Pancreas (tissue), 10 donors: ENCODE measurements at regions of chr1 and their contacts with region 1.

Region 1: GRCh38 chr1:17125756-17126237 is 6.5 kb upstream of the PADI2 start:
- DNase-seq: peak; percentile 77 to 99 (median 92)
- ATAC-seq: peak; percentile 88 to 95 (median 93)
- H3K4me3 ChIP-seq: no peak overlapping the region
- H3K27ac ChIP-seq: no peak overlapping the region
- H3K4me1 ChIP-seq: no peaks in the 10 kb centered on the region
- H3K27me3 ChIP-seq: no peaks in the 10 kb centered on the region
- CTCF ChIP-seq: peak; percentile 83 to 90 (median 88)

Region 2: DNA sequence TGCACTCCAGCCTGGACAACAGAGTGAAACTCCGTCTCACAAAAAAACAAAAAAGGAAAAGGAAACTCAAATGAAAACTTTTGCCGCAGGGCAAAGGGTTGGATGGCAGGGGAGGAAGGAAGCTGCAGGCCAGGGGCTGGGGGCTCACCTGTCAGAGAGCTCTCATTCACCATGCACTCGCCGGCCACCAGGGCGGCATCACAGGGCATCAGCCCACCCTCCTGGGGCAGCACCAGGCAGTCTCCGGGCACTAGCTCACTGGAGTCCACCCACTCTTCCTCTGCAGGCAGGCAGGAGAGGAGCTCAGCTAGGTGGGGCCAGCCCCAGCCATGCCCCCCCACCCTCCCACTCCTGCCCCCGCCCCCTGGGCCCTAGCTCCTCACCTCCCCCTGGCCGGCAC is 125.9 kb before region 1 on chr1:
- intact Hi-C with region 1: no loop called
- DNase-seq: no peak
- ATAC-seq: no peak
- H3K4me3 ChIP-seq: no peak overlapping the region
- H3K27ac ChIP-seq: no peak overlapping the region
- H3K4me1 ChIP-seq: no peaks in the 10 kb centered on the region
- H3K27me3 ChIP-seq: no peaks in the 10 kb centered on the region
- CTCF ChIP-seq: no peak

Region 3: DNA sequence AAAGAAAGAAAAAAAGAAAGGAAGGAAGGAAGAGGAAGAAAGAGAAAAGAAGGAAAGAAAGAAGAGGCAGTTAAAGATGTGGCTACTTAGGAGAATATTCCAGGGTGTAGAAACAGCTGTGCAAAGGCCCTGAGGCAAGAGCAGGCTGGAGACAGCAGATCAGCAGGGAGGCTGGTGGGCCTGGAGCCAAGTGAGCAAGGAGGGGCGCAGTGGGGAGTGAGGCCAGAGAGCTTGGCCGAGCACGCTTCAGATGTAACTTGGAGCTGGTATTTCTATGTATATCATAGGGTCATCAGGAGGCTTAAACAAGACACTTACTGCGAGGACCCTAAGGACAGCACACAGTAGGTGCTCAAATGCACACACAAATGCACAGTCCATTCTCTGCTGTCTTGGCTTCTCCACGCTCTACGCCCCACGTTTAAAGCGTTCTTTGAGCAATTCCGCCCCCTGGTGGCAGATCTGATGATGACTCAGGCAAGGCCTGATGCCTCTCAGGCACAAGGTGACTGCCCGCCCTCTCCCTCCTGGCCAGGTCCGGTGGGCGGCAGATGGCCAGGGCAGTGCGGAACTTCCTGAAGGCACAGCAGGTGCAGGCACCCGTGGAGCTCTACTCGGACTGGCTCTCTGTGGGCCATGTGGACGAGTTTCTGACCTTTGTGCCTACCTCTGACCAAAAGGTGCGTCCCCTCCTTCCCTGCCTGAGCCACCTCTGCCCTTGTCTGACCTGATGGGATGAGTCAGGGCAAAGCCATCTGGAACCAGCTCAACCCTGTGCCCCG is 111.2 kb after region 1 on chr1:
- intact Hi-C with region 1: loop called in 2 of 3 experiments (anchors 5 kb)
- DNase-seq: peak; percentile 74 to 98 (median 90)
- ATAC-seq: peak; percentile 51 to 83 (median 78)
- H3K4me3 ChIP-seq: no peak overlapping the region
- H3K27ac ChIP-seq: no peak overlapping the region
- H3K4me1 ChIP-seq: peaks cover 2 to 5% (median 4%) of the 10 kb centered on the region in 3 donors
- H3K27me3 ChIP-seq: no peaks in the 10 kb centered on the region
- CTCF ChIP-seq: peak; percentile 85 to 92 (median 87)

Region 4: DNA sequence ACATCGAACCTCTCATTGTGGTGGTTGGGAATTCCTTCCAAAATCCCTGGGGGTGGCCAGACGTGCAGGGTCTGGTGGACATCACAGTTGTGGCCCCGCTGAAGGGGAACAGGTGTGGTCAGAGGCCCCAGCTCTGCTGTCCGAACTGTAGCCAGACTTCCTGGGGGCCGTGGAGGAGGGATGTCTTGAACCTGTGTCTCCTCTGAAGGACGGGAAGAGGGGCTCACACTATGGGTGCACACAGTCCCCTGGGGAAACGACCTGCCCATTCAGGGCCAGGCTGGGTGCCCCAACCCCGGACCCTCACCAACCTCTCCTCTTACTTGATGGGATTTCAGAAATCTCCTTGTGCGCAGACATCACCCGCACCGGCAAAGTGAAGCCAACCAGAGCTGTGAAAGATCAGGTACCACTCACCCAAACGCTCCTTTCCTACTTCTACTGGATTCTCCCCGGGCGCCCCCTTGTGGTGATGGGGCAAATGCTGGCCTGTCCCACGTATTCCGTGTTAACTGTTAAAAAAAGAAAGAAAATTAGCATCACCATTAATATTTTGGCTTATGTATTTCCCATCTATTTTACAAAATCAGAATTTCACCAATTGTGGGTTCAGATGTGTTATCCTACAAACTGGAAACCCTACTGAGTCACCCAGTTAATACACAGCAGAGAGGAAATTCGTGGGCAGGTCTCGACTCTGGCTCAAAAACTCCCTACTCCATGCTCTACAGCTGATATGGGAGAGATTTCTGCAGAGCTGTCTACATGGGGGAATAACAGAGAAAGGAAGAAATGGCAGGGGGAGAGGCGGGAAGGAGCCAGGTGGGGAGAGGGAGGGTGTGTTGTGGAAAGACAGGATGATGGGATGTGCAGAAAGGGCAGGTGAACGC is 210.3 kb after region 1 on chr1:
- intact Hi-C with region 1: loop called in 2 of 3 experiments (anchors 5 to 10 kb)
- DNase-seq: peak; percentile 36 to 91 (median 73)
- ATAC-seq: peak; percentile 56 to 85 (median 80)
- H3K4me3 ChIP-seq: no peak overlapping the region
- H3K27ac ChIP-seq: no peak overlapping the region
- H3K4me1 ChIP-seq: no peaks in the 10 kb centered on the region
- H3K27me3 ChIP-seq: no peaks in the 10 kb centered on the region
- CTCF ChIP-seq: peak; percentile 52 to 89 (median 72)